ENCODE measurements at regions of chr19 and their contacts with region 1.

Region 1: GRCh38 chr19:34677386-34678084 is at the start of gene ZNF302:
- DNase-seq: peak; percentile 94 to 97 (median 96)
- H3K4me3 ChIP-seq: peak within 1 kb of the TSS; percentile 50 to 91 (median 79)
- H3K4me3 Mint-ChIP-seq: peak within 1 kb of the TSS; percentile 96 to 99
- H3K27ac ChIP-seq: peak within 1 kb of the TSS; percentile 93 to 98
- H3K27ac Mint-ChIP-seq: peak within 1 kb of the TSS; percentile 95 to 100 (median 99)
- H3K4me1 ChIP-seq: peaks cover 16 to 20% of the 10 kb centered on the region in 2 donors
- H3K4me1 Mint-ChIP-seq: peaks cover 16% of the 10 kb centered on the region
- H3K27me3 ChIP-seq: peaks cover 2 to 18% of the 10 kb centered on the region in 2 donors
- H3K27me3 Mint-ChIP-seq: peaks cover 4 to 23% (median 19%) of the 10 kb centered on the region in 3 donors
- CTCF ChIP-seq: peak; percentile 2
- polyA plus RNA-seq, gene ZNF302: 3.2 to 9.0 (median 4.4) TPM

Region 2: GRCh38 chr19:34171877-34172660 is 505.5 kb before region 1 on chr19 and contains the start of gene LSM14A:
- intact Hi-C with region 1: loop called in 1 of 2 experiments (anchors 10 kb)
- DNase-seq: peak; percentile 89 to 91 (median 89)
- H3K4me3 ChIP-seq: peak within 1 kb of the TSS; percentile 79 to 93 (median 91)
- H3K4me3 Mint-ChIP-seq: peak within 1 kb of the TSS; percentile 89 to 99
- H3K27ac ChIP-seq: peak within 1 kb of the TSS; percentile 92 to 98
- H3K27ac Mint-ChIP-seq: peak within 1 kb of the TSS; percentile 94 to 99 (median 97)
- H3K4me1 ChIP-seq: peaks cover 29 to 43% of the 10 kb centered on the region in 2 donors
- H3K4me1 Mint-ChIP-seq: peaks cover 43% of the 10 kb centered on the region
- H3K27me3 ChIP-seq: no peaks in the 10 kb centered on the region
- H3K27me3 Mint-ChIP-seq: peaks cover 0 to 5% (median 0%) of the 10 kb centered on the region in 3 donors
- CTCF ChIP-seq: no peak
- polyA plus RNA-seq, gene LSM14A: 73.2 to 91.8 (median 82.7) TPM

Region 3: DNA sequence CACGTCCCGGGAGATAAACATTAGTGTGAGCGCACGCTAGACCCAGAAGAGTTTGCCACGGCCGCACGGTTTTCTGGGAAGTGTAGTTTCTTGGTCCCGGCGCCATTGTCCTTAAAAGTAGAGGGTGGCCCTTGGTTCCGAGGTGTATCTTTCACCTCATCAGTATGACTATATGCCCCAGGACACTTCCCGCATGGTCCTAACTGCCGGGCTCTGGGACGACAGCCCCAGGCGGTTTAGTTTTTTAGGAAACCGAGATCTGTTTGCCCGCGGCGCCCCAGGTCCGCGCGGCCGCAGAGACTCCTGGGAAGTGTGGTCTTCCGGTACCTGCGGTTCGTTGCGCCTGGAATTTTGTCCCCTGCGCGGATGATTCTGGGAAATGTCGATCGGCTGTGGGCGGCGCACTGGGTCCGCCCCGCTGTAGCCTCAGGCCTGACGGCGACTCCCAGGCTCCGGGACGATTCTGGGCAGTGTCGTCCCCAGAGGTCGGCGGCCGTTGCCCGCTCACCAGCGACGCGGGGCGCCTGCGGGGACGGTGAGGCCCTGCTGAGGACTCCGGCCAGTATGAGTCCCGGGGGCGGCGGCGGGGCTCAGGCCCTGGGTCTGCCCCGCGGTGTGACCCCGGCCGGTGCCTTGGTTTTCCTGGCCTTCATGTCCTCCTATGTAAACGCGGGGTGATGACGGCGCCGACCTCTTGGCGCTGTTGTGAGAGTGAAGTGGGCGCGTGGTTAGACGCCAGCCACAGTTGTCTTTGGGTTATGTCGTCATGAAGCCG is 56.5 kb after region 1 on chr19 and contains the start of gene ZNF181:
- intact Hi-C with region 1: loop called (anchors 2 to 5 kb)
- DNase-seq: peak; percentile 74 to 86 (median 78)
- H3K4me3 ChIP-seq: peak within 1 kb of the TSS; percentile 81 to 94 (median 83)
- H3K4me3 Mint-ChIP-seq: peak within 1 kb of the TSS; percentile 91 to 93
- H3K27ac ChIP-seq: peak within 1 kb of the TSS; percentile 74 to 87
- H3K27ac Mint-ChIP-seq: peak within 1 kb of the TSS; percentile 93 to 97 (median 96)
- H3K4me1 ChIP-seq: peaks cover 16 to 24% of the 10 kb centered on the region in 2 donors
- H3K4me1 Mint-ChIP-seq: peaks cover 14% of the 10 kb centered on the region
- H3K27me3 ChIP-seq: no peaks in the 10 kb centered on the region
- H3K27me3 Mint-ChIP-seq: peaks cover 0 to 3% (median 1%) of the 10 kb centered on the region in 3 donors
- CTCF ChIP-seq: no peak
- polyA plus RNA-seq, gene ZNF181: 2.3 to 5.7 (median 3.0) TPM

Region 4: DNA sequence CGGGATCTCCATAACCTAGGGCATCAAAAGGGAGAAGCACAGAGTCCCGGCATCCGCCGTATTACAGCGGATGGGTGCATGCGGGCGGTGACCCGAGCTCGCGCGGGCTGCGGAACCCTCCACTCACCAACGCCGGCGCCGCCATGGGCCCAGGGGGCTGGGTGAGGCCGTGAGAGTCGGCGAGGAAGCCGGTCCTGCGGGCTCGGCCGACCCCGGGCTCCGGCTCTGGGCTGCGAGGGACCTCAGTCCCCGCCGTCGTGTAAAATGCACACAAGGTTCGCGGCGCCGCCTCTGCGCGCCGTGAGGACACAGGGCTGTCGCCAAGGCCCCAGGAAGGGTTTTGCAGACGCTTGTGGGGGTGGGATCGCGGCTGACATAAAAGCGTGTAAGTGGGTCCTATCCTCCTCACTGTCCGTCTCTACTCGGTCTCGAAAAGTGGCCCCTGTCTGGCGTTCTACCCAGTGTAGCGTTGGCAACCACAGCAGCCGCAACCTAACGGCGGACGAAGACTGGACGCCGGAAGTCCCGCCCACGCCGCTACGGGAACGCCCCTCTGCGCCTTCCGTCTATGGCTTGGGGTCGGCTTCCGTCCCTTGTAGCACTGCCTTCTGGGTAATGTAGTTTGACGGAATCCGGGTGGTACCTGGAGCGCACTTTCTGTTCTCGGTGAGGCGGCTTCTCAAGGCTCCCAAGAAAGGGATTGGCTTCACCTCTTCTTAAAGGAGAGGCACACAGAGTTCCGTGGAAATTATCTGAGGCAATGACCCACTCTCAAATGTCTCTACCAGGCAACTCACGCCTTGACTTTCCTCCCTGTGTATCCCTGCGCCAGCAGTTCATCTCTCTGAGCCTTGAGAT is 95.4 kb after region 1 on chr19 and contains the start of gene ZNF599:
- intact Hi-C with region 1: loop called in 1 of 2 experiments (anchors 5 kb)
- DNase-seq: peak; percentile 66 to 85 (median 72)
- H3K4me3 ChIP-seq: peak within 1 kb of the TSS; percentile 65 to 74 (median 71)
- H3K4me3 Mint-ChIP-seq: peak within 1 kb of the TSS; percentile 83 to 90
- H3K27ac ChIP-seq: no peak within 1 kb of the TSS
- H3K27ac Mint-ChIP-seq: peak within 1 kb of the TSS in 4 of 7 donors; percentile 7 to 71 (median 66)
- H3K4me1 ChIP-seq: peaks cover 11 to 13% of the 10 kb centered on the region in 2 donors
- H3K4me1 Mint-ChIP-seq: peaks cover 12% of the 10 kb centered on the region
- H3K27me3 ChIP-seq: peaks cover 0 to 2% of the 10 kb centered on the region in 2 donors
- H3K27me3 Mint-ChIP-seq: peaks cover 5 to 7% (median 5%) of the 10 kb centered on the region in 3 donors
- CTCF ChIP-seq: no peak
- polyA plus RNA-seq, gene ZNF599: 0.85 to 0.99 (median 0.91) TPM

Region 5: DNA sequence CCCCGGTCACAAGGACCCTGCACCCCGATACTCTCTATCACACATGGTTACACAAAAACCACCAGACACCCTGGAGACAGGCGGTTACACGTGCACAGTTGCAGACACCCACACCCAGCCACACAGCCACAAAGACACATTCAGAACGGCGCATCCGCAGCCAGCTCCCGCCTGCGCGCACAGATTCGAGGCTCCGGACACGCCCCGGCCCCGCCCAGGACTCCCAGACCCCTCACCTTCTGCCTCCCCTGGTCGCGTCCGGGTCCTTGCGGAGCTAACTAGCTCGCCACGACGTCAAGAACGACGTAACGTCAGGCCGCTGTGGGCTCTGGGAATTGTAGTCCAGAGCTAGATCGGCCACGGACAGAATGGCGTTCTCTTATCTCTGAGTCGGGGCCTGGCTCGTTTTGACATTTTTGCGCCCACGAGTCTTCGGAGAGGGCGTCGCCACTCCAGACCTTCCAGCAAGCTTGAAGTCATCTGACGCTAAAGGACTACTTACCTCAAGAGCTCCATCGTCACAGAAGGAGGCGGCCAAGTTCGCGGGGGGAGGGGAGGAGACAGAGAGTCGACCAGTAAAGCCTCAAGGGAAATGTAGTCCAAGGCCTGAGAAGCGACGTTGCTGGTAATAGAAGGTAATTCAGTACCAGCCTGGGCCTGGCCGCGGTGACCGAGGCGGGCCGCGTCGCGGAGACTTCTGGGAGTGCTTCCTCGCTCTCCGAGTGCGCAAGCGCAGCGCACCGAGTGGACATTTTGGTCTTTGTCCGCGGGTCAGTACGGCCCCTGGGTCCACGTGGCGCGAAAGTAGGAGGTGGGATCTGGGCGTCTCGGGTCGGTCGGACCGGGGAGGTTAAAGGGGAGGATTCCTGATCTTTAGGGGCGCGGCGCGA is 1537.1 kb after region 1 on chr19 and contains the starts of genes ZNF146 and ZNF565:
- intact Hi-C with region 1: loop called in 1 of 2 experiments (anchors 10 kb)
- DNase-seq: peak; percentile 96 to 99 (median 96)
- H3K4me3 ChIP-seq: peak within 1 kb of the TSS; percentile 61 to 92 (median 69)
- H3K4me3 Mint-ChIP-seq: no peak within 1 kb of the TSS
- H3K27ac ChIP-seq: peak within 1 kb of the TSS; percentile 72 to 95
- H3K27ac Mint-ChIP-seq: no peak within 1 kb of the TSS
- H3K4me1 ChIP-seq: peaks cover 11 to 18% of the 10 kb centered on the region in 2 donors
- H3K4me1 Mint-ChIP-seq: peaks cover 5% of the 10 kb centered on the region
- H3K27me3 ChIP-seq: no peaks in the 10 kb centered on the region
- H3K27me3 Mint-ChIP-seq: no peaks in the 10 kb centered on the region
- CTCF ChIP-seq: no peak
- polyA plus RNA-seq, gene ZNF146: 12.2 to 26.5 (median 15.8) TPM
- polyA plus RNA-seq, gene ZNF565: 1.5 to 3.5 (median 2.1) TPM

Measured in CD14-positive monocyte (primary cell).